Naive thymus-derived CD4-positive, alpha-beta T cell (primary cell): ENCODE measurements at regions of chr13 and their contacts with region 1.

Region 1: DNA sequence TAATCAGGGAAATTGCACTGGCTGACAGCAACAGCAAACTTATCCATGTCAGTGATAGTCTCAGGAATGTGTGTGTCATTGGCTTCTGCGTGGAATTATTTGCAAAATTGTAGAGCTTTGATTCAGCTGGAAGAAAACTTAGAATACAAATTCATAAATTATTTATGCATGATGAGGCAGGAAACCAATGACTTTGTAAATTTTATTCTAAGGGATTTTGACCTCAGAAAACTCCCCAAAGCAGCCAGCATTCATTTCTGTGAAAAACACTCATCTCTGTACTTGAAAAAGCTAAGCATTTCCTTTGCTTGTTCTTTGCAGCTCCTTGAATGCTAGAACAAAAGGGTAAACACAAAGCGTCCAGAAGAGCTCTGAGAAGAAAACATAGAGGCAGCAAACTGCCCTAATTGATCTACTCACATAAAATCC is 162.4 kb downstream of the DCT start:
- DNase-seq: no peak
- ATAC-seq: no peak
- H3K4me3 ChIP-seq: no peak overlapping the region
- H3K4me3 Mint-ChIP-seq: peak overlapping the region in 5 of 10 donors; percentile 6 to 32 (median 26)
- H3K27ac ChIP-seq: no peak overlapping the region
- H3K27ac Mint-ChIP-seq: peak overlapping the region in 2 of 9 donors; percentile 50 to 68
- H3K4me1 ChIP-seq: peaks cover 0 to 4% of the 10 kb centered on the region in 2 donors
- H3K4me1 Mint-ChIP-seq: peaks cover under 1 to 45% (median 18%) of the 10 kb centered on the region in 7 donors
- H3K27me3 ChIP-seq: no peaks in the 10 kb centered on the region
- H3K27me3 Mint-ChIP-seq: no peaks in the 10 kb centered on the region

Region 2: DNA sequence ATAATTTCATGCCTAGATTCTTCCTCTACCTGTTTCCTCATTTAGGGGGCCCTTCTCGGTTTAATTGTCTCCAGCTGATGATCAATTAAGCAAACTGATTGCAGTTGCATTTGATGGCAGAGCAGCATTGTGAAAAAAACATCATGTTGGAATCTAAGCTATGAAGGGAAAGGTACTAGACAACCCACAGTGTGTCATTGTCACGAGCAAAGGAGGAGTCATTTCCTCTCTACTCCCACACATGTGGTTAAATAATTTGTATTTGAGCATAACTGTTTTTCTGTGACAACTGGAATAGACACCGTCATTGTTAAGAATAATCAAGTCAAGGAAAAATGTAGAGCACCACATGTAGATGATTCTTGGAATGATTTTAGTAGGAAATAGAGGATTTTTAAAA is 77.9 kb before region 1 on chr13:
- CTCF ChIA-PET with region 1: no interaction called
- POLR2A ChIA-PET with region 1: interaction called, 3 read pairs
- intact Hi-C with region 1: loop called in 1 of 2 experiments (anchors 5 kb)
- DNase-seq: peak in 7 of 9 donors; percentile 24 to 55 (median 35)
- ATAC-seq: peak; percentile 71
- H3K4me3 ChIP-seq: no peak overlapping the region
- H3K4me3 Mint-ChIP-seq: peak overlapping the region in 9 of 10 donors; percentile 12 to 59 (median 38)
- H3K27ac ChIP-seq: no peak overlapping the region
- H3K27ac Mint-ChIP-seq: peak overlapping the region in 7 of 9 donors; percentile 1 to 85 (median 24)
- H3K4me1 ChIP-seq: peaks cover 0 to 23% of the 10 kb centered on the region in 2 donors
- H3K4me1 Mint-ChIP-seq: peaks cover 24 to 45% (median 41%) of the 10 kb centered on the region in 7 donors
- H3K27me3 ChIP-seq: no peaks in the 10 kb centered on the region
- H3K27me3 Mint-ChIP-seq: no peaks in the 10 kb centered on the region

Region 3: DNA sequence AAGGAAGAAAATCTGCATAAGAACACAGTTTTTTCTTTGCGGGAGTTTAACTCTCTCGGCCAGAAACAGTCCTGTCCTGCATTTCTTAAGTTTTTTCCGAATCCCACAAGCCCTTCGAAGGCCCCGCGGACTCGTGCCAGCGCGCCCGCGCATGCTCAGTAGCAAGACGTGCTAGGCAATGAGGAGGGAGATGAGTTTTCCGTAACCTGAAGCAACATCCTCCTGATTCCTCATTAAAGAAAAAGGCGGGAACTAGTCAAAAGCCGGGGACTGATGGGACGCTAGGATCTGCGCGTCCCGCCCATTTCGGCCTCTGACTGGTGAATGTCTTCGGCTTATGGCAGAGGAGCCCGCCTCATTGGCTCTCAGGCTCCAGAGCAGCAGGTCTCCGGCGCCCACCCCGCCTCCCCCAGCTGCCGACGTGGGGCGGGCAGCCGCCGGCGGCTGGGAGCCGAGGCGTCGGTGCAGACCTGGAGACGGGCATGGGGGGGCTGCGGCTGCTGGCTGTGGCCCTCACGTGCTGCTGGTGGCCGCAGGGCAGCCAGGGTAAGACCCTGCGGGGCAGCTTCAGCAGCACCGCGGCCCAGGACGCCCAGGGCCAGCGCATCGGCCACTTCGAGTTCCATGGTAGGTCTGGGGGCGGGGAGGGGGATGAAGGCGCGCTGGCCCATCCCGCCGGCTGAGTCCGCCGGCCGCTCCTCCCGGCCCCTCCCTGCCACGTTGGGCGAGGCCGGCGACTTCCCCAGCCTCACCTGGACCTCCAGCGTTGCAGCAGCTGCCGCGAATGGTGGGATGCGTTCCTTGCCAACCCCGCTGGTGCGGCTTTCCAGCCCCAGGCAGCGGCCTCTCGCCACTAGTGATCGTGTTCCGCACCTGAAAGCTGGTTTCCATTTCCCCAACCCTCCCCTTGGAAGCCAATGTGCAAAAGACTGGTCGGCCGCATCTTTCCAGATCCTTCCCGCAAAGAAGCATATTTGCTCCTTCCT is 284.7 kb after region 1 on chr13 and contains the start of gene GPR180:
- CTCF ChIA-PET with region 1: no interaction called
- POLR2A ChIA-PET with region 1: no interaction called
- intact Hi-C with region 1: loop called (anchors 5 kb)
- DNase-seq: peak; percentile 67 to 92 (median 88)
- ATAC-seq: peak; percentile 99
- H3K4me3 ChIP-seq: peak within 1 kb of the TSS; percentile 58
- H3K4me3 Mint-ChIP-seq: peak within 1 kb of the TSS; percentile 79 to 90 (median 86)
- H3K27ac ChIP-seq: peak within 1 kb of the TSS; percentile 75
- H3K27ac Mint-ChIP-seq: peak within 1 kb of the TSS; percentile 82 to 90 (median 87)
- H3K4me1 ChIP-seq: peaks cover 0 to 10% of the 10 kb centered on the region in 2 donors
- H3K4me1 Mint-ChIP-seq: peaks cover 16 to 45% (median 32%) of the 10 kb centered on the region in 7 donors
- H3K27me3 ChIP-seq: no peaks in the 10 kb centered on the region
- H3K27me3 Mint-ChIP-seq: no peaks in the 10 kb centered on the region
- total RNA-seq, gene GPR180: 1.8 to 7.0 (median 5.4) TPM